ENCODE measurements at regions of chr17 and their contacts with region 1.

Region 1: DNA sequence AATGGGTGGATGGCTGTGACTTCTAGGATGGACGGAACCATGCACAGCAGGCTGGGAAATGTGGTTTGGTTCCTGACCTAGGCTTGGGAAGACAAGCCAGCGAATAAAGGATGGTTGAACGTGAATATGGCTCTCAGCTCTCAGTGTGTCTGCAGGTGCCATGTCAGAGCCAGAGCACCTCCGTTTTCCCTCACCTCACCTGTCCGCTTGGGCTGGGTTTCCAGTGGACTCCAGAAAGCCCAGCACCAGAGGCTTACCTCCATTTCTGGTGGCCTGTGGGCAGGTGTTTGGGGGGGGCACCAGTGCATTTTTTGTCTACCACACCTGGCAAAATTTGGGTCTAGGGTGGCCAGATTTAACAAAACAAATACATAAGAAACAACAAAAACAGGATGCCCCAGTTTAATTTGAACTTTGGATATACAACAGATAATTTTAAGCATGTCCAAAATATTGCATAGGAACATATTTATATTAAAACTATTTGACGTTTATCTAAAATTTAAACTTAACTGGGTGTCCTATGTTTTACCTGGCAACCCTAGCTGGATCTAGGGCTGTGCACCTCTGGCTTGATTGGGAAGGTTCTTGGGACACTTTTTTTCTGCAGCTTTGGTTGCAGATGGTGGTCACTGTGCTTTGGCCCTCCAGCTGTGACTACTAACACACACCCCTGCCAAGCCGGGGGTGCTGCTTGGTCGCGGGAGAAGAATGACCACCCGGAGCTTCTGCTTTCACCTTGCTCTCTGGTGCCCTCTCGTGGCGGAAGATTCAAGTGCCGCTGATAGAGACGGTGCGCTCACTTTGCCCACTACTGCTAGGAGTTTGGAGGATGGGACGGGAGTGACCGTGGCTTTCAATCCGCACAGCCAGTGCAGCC is 6.3 kb downstream of the SPACA3 start:
- DNase-seq: peak; percentile 54 to 97
- H3K4me3 ChIP-seq: peak overlapping the region in 1 of 4 experiments; percentile 32; a peak in 1 of 8 replicates
- H3K27ac ChIP-seq: no peak overlapping the region
- H3K4me1 ChIP-seq: peaks cover 0 to 3% (median 0%) of the 10 kb centered on the region in 4 experiments; a peak in 2 of 7 replicates
- H3K27me3 ChIP-seq: peaks cover 0 to 5% (median 0%) of the 10 kb centered on the region in 4 experiments; a peak in 4 of 7 replicates
- CTCF ChIP-seq: peak; percentile 85 to 93 (median 85)
- EP300 ChIP-seq: no peak
- POLR2A ChIP-seq: no peak
- RAD21 ChIP-seq: peak; percentile 73 to 83

Region 2: DNA sequence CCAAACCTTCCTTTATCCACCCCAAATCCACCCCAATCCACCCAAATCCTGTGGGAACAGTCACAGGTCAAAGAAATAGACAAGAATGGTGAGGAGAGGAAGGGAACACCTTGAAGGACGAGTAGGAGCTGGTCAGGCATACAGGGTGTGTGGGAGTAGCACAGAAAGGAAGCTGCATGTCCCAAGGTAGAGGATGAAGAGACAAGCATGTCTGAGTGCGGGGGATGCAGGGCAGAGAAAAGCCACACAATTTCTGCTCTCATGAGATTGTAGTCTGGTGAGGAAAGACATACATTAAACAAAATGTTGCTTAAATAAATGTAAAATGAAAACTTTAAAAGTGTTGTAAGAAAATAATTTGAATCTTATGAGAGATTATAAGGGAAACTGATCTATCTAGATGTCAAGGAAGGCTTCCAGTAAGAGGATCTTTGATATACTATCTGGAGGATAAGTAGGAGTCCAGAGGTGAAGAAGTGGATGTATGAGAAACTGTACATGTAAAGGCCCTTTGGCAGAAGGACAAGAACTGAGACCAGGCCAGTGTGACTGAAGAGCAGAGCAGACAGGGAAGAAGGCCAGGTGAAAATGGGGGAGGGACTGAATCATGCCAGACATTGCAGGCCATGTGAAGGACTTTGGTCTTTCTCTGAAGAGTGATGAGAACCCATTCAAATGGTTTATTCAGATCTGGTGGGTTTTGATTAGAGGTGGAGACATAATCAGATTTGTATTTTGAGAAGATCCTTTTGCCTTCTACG is 51.4 kb before region 1 on chr17:
- CTCF ChIA-PET with region 1: interaction called, 10 read pairs
- POLR2A ChIA-PET with region 1: no interaction called
- DNase-seq: no peak
- H3K4me3 ChIP-seq: no peak overlapping the region
- H3K27ac ChIP-seq: no peak overlapping the region
- H3K4me1 ChIP-seq: no peaks in the 10 kb centered on the region
- H3K27me3 ChIP-seq: no peaks in the 10 kb centered on the region; a peak in 1 of 7 replicates
- CTCF ChIP-seq: no peak
- EP300 ChIP-seq: no peak
- POLR2A ChIP-seq: no peak
- RAD21 ChIP-seq: no peak

Region 3: GRCh38 chr17:33009636-33010035 is 11.6 kb after region 1 on chr17:
- CTCF ChIA-PET with region 1: interaction called, 10 read pairs
- POLR2A ChIA-PET with region 1: no interaction called
- DNase-seq: no peak
- H3K4me3 ChIP-seq: no peak overlapping the region
- H3K27ac ChIP-seq: no peak overlapping the region
- H3K4me1 ChIP-seq: no peaks in the 10 kb centered on the region; a peak in 1 of 7 replicates
- H3K27me3 ChIP-seq: no peaks in the 10 kb centered on the region
- CTCF ChIP-seq: no peak
- EP300 ChIP-seq: no peak
- POLR2A ChIP-seq: no peak
- RAD21 ChIP-seq: no peak

Region 4: GRCh38 chr17:33021731-33022408 is 23.9 kb after region 1 on chr17:
- CTCF ChIA-PET with region 1: interaction called, 15 read pairs
- POLR2A ChIA-PET with region 1: interaction called, 3 read pairs
- DNase-seq: peak in 1 of 2 experiments; percentile 48
- H3K4me3 ChIP-seq: no peak overlapping the region
- H3K27ac ChIP-seq: no peak overlapping the region
- H3K4me1 ChIP-seq: peaks cover 0 to 12% (median 5%) of the 10 kb centered on the region in 4 experiments; a peak in 5 of 7 replicates
- H3K27me3 ChIP-seq: no peaks in the 10 kb centered on the region; a peak in 2 of 7 replicates
- CTCF ChIP-seq: peak in 1 of 3 experiments; percentile 52; a peak in 2 of 4 replicates
- EP300 ChIP-seq: no peak
- POLR2A ChIP-seq: no peak
- RAD21 ChIP-seq: peak; percentile 31 to 43

Region 5: GRCh38 chr17:33091271-33091670 is 93.3 kb after region 1 on chr17:
- CTCF ChIA-PET with region 1: no interaction called
- POLR2A ChIA-PET with region 1: no interaction called
- DNase-seq: no peak
- H3K4me3 ChIP-seq: no peak overlapping the region
- H3K27ac ChIP-seq: no peak overlapping the region
- H3K4me1 ChIP-seq: no peaks in the 10 kb centered on the region
- H3K27me3 ChIP-seq: no peaks in the 10 kb centered on the region; a peak in 3 of 7 replicates
- CTCF ChIP-seq: no peak
- EP300 ChIP-seq: no peak
- POLR2A ChIP-seq: no peak
- RAD21 ChIP-seq: no peak